ENCODE measurements at regions of chr18 and their contacts with region 1.

Region 1: GRCh38 chr18:3771121-3771971 is 321.4 kb downstream of the TGIF1 start:
- DNase-seq: peak; percentile 88
- H3K4me3 ChIP-seq: peak overlapping the region; percentile 14 to 17
- H3K27ac ChIP-seq: peak overlapping the region; percentile 73
- H3K4me1 ChIP-seq: peaks cover 4% of the 10 kb centered on the region
- H3K27me3 ChIP-seq: no peaks in the 10 kb centered on the region
- CTCF ChIP-seq: peak; percentile 88 to 98 (median 96)
- POLR2A ChIP-seq: no peak

Region 2: DNA sequence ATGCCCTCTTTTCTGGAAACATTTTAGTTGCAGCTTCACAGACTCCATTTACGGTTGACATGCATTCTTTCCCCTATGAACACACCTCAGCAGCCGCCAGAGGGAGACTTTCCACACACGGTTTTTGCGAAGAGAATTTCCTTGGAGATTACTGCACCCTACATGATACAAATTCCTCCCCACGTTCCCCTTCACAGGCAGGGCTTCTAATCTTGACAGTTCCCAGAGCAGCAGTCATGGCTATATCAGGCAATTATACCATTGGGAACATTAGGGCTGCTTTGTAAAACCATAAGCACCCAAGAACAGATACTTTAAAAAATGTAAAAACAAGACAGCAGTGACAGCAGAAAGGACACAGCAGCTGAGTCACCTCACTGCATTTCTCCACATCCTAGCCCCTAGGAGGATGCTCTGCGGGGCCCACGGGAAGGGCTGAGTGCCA is 67.6 kb before region 1 on chr18:
- intact Hi-C with region 1: loop called (anchors 2 kb)
- DNase-seq: peak; percentile 59
- H3K4me3 ChIP-seq: no peak overlapping the region
- H3K27ac ChIP-seq: no peak overlapping the region
- H3K4me1 ChIP-seq: no peaks in the 10 kb centered on the region
- H3K27me3 ChIP-seq: no peaks in the 10 kb centered on the region
- CTCF ChIP-seq: peak; percentile 23 to 69 (median 60)
- POLR2A ChIP-seq: no peak

Region 3: DNA sequence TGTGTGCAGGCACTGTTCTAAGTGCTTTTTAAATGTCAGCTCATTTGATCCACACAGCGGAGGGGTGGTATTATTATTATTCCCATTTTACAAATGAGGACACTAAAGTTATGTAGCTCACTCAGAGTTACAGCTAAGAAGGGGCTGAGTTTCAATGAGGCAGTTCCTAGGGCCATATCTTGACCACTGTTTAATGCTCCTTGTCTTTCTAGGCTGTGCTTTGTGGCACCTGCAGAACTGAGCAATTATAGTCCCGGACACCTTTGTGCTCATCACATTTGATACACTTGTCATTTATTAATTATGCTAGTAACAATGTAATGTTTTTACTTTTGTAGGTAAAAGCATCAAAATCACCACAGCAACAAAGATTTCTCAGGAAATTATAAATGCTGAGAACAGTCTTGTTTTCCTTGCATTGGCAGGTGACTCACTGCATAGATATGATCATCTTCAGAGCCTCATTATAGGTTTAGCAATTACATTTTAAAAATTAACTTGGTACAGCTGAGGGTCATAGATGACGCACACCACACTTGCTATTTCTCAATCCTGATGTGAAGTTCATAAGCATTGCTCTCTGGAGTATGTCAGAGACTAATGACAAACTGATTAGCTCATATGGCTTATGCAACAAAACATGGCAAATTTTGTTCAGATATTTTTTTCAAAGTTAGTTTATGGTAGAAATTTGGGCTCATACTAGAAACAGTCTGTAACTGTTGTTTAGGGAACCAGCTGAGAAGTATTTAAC is 45.4 kb after region 1 on chr18:
- intact Hi-C with region 1: no loop called
- DNase-seq: no peak
- H3K4me3 ChIP-seq: no peak overlapping the region
- H3K27ac ChIP-seq: no peak overlapping the region
- H3K4me1 ChIP-seq: no peaks in the 10 kb centered on the region
- H3K27me3 ChIP-seq: no peaks in the 10 kb centered on the region
- CTCF ChIP-seq: no peak
- POLR2A ChIP-seq: no peak

Region 4: GRCh38 chr18:3869848-3870247 is 98.5 kb after region 1 on chr18:
- intact Hi-C with region 1: loop called (anchors 2 kb)
- DNase-seq: no peak
- H3K4me3 ChIP-seq: no peak overlapping the region
- H3K27ac ChIP-seq: no peak overlapping the region
- H3K4me1 ChIP-seq: no peaks in the 10 kb centered on the region
- H3K27me3 ChIP-seq: no peaks in the 10 kb centered on the region
- CTCF ChIP-seq: peak; percentile 15 to 63 (median 38)
- POLR2A ChIP-seq: no peak

Region 5: GRCh38 chr18:3995476-3996102 is 224.2 kb after region 1 on chr18:
- intact Hi-C with region 1: loop called (anchors 2 kb)
- DNase-seq: peak; percentile 44
- H3K4me3 ChIP-seq: no peak overlapping the region
- H3K27ac ChIP-seq: no peak overlapping the region
- H3K4me1 ChIP-seq: no peaks in the 10 kb centered on the region
- H3K27me3 ChIP-seq: no peaks in the 10 kb centered on the region
- CTCF ChIP-seq: peak; percentile 55 to 73 (median 60)
- POLR2A ChIP-seq: no peak

Region 6: DNA sequence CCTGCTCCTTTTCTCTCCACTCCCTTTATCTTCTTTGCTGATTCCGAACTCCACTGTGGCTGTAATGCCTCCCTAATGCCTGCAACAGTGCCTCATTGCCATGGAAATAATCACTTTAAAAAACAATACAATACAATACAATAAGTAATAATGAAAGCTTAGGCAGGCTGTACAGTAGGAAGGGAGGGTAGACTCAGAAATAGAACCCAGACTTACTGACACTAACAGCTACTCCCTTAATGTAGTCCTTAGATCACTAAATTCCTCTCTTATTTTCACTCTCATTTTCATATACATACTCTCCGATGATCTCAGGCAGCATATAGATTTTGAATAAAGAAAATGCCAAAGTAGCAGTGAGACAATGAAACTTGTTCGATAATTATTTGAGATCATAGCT is 613.6 kb after region 1 on chr18:
- intact Hi-C with region 1: no loop called
- DNase-seq: no peak
- H3K4me3 ChIP-seq: no peak overlapping the region
- H3K27ac ChIP-seq: no peak overlapping the region
- H3K4me1 ChIP-seq: no peaks in the 10 kb centered on the region
- H3K27me3 ChIP-seq: no peaks in the 10 kb centered on the region
- CTCF ChIP-seq: no peak
- POLR2A ChIP-seq: no peak